OCI-LY7 (cell line): ENCODE measurements at regions of chr6 and their contacts with region 1.

Region 1: GRCh38 chr6:118761645-118762044 is 110.3 kb upstream of the CEP85L start:
- DNase-seq: no peak
- H3K4me3 ChIP-seq: no peak overlapping the region
- H3K27ac ChIP-seq: no peak overlapping the region
- H3K4me1 ChIP-seq: no peaks in the 10 kb centered on the region
- CTCF ChIP-seq: no peak

Region 2: GRCh38 chr6:118800394-118801071 is 38.9 kb after region 1 on chr6:
- CTCF ChIA-PET with region 1: no interaction called
- POLR2A ChIA-PET with region 1: no interaction called
- intact Hi-C with region 1: no loop called
- DNase-seq: peak; percentile 86
- H3K4me3 ChIP-seq: no peak overlapping the region
- H3K27ac ChIP-seq: no peak overlapping the region
- H3K4me1 ChIP-seq: no peaks in the 10 kb centered on the region
- CTCF ChIP-seq: peak; percentile 95

Region 3: DNA sequence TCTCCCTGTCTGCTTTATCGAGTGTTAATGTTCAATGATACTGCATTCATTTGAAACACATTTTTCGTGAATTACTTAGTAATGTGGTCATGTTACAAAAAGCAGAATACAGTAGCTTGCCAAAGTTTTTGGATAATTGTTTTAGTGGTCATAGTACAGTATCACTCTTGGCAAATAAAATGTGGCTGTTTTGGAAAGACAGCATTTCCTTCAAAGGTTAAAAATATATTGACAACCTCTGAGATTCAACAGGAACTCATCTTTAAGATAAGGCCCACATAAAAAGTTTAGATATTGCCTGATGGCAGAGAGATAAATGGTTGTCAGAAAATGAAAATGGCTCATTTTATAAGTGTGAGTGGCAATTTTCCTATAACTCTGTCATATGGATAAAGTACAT is 885.7 kb after region 1 on chr6:
- CTCF ChIA-PET with region 1: interaction called, 3 read pairs
- POLR2A ChIA-PET with region 1: interaction called, 12 read pairs
- intact Hi-C with region 1: no loop called
- DNase-seq: no peak
- H3K4me3 ChIP-seq: no peak overlapping the region
- H3K27ac ChIP-seq: no peak overlapping the region
- H3K4me1 ChIP-seq: peaks cover 10% of the 10 kb centered on the region
- CTCF ChIP-seq: no peak